ENCODE measurements at regions of chr18 and their contacts with region 1.

Region 1: DNA sequence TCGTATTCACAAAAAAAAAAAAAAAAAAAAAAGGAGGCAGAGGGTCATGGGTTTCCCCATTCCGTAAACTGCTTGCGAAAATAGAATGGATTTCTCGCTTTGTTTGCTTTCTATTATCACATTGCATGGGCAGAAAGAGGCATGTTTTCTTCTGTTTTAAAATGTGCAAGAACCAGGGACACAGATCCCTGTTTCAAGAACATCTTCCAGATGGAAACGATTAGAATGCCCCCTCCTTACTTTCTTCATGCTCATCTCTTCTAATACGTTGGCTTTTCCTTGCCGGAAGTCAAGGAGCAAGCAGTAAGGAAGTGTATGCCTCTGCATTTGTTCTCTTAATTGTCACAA is 51.0 kb upstream of the ZNF516 start:
- DNase-seq: no peak
- ATAC-seq: no peak
- H3K4me3 ChIP-seq: no peak overlapping the region
- H3K4me3 Mint-ChIP-seq: no peak overlapping the region
- H3K27ac ChIP-seq: no peak overlapping the region
- H3K27ac Mint-ChIP-seq: no peak overlapping the region
- H3K4me1 ChIP-seq: no peaks in the 10 kb centered on the region
- H3K4me1 Mint-ChIP-seq: no peaks in the 10 kb centered on the region
- H3K27me3 ChIP-seq: no peaks in the 10 kb centered on the region
- H3K27me3 Mint-ChIP-seq: peaks cover 8% of the 10 kb centered on the region
- CTCF ChIP-seq: no peak

Region 2: DNA sequence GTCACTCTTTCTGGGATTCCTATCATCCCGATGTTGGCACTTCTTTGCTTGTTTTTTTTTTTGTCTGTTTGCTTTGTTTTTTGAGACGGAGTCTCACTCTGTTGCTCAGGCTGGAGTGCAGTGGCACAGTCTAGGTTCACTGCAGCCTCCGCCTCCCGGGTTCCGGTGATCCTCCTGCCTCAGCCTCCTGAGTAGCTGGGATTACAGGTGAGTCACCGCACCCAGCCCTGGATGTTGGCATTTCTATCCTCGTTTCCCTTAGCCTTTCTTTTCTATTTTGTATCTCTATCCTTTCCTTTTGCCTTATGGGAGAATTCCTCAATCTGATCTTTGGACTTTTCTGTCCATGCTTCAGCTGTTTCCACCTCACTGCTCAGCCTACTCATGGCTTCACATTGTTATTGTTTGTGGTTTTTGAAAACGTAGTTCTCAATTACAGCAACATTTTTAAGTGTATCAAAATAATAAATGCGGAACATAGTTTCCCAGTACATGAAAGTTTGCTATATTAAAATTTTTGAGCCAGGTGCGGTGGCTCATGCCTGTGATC is 11.0 kb after region 1 on chr18:
- CTCF ChIA-PET with region 1: no interaction called
- POLR2A ChIA-PET with region 1: no interaction called
- intact Hi-C with region 1: loop called in 1 of 2 experiments (anchors 2 kb)
- DNase-seq: no peak
- ATAC-seq: no peak
- H3K4me3 ChIP-seq: no peak overlapping the region
- H3K4me3 Mint-ChIP-seq: no peak overlapping the region
- H3K27ac ChIP-seq: no peak overlapping the region
- H3K27ac Mint-ChIP-seq: no peak overlapping the region
- H3K4me1 ChIP-seq: no peaks in the 10 kb centered on the region
- H3K4me1 Mint-ChIP-seq: no peaks in the 10 kb centered on the region
- H3K27me3 ChIP-seq: no peaks in the 10 kb centered on the region
- H3K27me3 Mint-ChIP-seq: peaks cover 16% of the 10 kb centered on the region
- CTCF ChIP-seq: no peak

Measured in CD8-positive, alpha-beta T cell (primary cell).